Gastrocnemius medialis (tissue), 4 donors: ENCODE measurements at regions of chr9 and their contacts with region 1.

Region 1: DNA sequence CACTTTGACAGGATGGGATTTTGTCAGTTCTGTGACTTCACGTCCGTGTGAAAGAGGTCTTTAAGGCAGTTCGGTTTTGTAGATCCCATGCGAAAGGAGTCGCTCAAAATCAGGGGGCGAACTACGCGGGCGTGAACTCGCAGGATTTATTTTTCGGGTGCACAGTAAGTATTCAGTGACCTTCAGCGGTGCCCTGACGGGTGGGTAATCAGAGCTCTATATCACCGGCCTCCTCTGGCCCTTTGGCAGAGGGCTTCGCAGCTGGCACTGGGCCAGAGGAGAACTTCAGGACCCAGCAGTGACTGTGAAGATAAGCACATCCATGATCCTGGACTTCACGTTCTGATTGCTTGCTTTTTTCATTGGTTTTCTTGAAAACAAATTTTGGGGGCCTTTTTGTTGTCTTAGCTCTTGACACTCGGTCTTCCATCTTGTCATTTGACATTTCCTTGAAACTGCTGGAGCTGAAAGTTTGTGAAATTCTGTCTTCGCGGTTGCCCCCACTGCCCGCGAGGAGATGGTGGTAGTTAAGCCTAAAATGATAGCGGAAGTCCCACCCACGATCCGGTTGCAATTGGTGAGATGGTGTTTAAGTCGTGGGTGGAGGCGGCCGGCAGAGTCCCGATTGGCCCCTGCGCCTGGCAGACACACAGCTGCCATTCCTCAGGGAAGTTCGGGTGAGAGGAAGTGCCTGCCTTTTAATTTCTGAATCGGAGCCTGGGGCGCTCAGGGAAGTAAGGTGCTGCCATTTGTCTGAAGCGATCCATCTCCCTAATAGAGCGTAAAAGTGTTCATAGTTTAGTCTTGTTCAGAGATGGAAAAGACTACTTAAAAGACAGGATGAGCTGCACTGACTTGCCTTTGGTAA is at the start of gene FAM120AOS:
- DNase-seq: peak; percentile 92 to 95
- ATAC-seq: peak; percentile 75 to 81
- H3K4me3 ChIP-seq: peak within 1 kb of the TSS; percentile 84 to 97 (median 94)
- H3K27ac ChIP-seq: peak within 1 kb of the TSS; percentile 93 to 99 (median 96)
- H3K4me1 ChIP-seq: peaks cover 44 to 58% of the 10 kb centered on the region in 2 donors
- H3K27me3 ChIP-seq: no peaks in the 10 kb centered on the region
- CTCF ChIP-seq: no peak
- POLR2A ChIP-seq: peak; percentile 79 to 84
- total RNA-seq, gene FAM120AOS: 22.8 to 49.5 (median 32.4) TPM

Region 2: DNA sequence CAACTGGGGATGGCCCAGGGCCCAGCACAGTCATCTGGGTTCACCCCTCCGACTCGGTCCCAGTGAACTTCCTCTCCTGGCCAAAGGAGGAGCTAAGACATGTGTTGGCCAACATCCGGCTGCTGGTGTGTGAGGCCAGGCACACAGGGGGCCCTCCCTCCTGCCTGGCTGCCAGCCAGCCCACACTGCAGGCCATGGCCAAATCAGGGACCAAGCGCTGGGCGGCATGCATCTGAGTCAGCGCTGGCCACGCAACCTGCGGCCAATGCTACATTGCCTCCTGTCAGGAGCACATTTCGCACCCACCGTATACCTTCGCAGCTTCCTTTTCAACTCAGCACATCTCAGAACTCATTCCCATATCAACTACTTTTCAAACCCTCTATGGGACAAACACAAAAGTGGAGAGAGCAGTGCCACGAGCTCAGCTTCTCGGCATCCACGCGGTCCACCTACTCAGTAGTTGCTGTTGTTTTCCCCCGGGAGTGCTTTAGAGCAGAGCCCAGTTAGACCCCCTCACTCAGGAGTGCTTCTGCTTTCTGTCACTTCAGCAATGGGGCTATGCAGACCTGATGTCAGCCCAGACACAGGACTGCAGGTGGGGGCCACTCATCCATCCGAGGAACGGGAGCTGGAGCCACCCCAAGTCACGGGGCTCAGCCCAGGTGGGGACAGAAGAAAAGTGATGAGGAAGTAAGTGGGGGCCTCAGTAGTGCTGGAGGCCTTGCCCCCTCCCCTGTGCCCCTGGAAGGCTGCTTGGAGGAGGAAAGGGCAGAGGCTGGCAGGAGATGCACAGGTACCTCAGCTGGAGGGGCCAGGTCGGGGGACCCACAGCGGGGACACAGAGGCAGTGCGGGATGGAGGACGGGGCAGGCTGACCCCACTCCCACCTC is 333.1 kb before region 1 on chr9:
- in situ Hi-C with region 1: loop called in 1 of 4 experiments (anchors 25 kb)
- intact Hi-C with region 1: no loop called
- DNase-seq: peak; percentile 85 to 93
- ATAC-seq: peak; percentile 68 to 79
- H3K4me3 ChIP-seq: no peak overlapping the region
- H3K27ac ChIP-seq: peak overlapping the region; percentile 65 to 72 (median 68)
- H3K4me1 ChIP-seq: peaks cover 11 to 18% of the 10 kb centered on the region in 2 donors
- H3K27me3 ChIP-seq: no peaks in the 10 kb centered on the region
- CTCF ChIP-seq: peak in 4 of 5 experiments; percentile 38 to 58 (median 45)
- POLR2A ChIP-seq: peak; percentile 21 to 29

Region 3: DNA sequence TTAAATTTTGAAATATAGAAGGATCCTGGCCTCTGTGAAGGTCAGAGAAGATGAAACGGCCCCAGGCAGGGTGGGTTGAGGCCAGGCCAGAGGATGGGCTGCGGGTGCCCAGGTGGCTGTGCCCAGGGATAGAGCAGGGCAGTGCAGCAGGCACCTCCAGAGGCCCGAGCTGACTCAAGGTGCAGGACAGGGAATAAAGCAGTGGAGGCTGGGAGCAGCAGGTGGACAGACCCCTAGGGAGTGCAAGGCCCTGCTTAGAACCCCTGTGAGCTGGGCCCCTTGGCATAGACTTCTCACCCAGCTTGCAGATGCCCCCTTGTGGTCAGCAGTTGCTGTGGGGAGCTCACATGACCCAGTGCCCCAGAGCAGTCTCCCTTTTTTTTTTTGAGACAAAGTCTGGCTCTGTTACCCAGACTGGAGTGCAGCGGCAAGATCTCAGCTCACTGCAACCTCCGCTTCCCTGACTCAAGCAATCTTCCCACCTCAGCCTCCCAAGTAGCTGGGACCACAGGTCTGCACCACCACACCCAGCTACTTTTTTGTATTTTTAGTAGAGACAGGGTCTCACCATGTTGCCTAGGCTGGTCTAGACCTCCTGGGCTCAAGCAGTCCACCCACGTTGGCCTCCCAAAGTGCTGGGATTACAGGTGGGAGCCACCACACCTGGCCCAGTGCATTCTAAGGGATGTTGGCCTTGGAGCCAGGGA is 150.6 kb before region 1 on chr9:
- in situ Hi-C with region 1: no loop called
- intact Hi-C with region 1: loop called (anchors 2 kb)
- DNase-seq: peak in 1 of 2 donors; percentile 58
- ATAC-seq: no peak
- H3K4me3 ChIP-seq: no peak overlapping the region
- H3K27ac ChIP-seq: peak overlapping the region in 1 of 4 donors; percentile 26
- H3K4me1 ChIP-seq: peaks cover 66 to 71% of the 10 kb centered on the region in 2 donors
- H3K27me3 ChIP-seq: no peaks in the 10 kb centered on the region
- CTCF ChIP-seq: peak in 4 of 5 experiments; percentile 33 to 59 (median 49)
- POLR2A ChIP-seq: no peak

Region 4: GRCh38 chr9:93509084-93509483 is 55.8 kb after region 1 on chr9:
- in situ Hi-C with region 1: no loop called
- intact Hi-C with region 1: loop called (anchors 2 kb)
- DNase-seq: no peak
- ATAC-seq: no peak
- H3K4me3 ChIP-seq: no peak overlapping the region
- H3K27ac ChIP-seq: peak overlapping the region in 2 of 4 donors; percentile 69 to 80
- H3K4me1 ChIP-seq: peaks cover 47 to 73% of the 10 kb centered on the region in 2 donors
- H3K27me3 ChIP-seq: no peaks in the 10 kb centered on the region
- CTCF ChIP-seq: no peak
- POLR2A ChIP-seq: no peak

Region 5: GRCh38 chr9:93536874-93537273 is 83.6 kb after region 1 on chr9:
- in situ Hi-C with region 1: no loop called
- intact Hi-C with region 1: loop called (anchors 2 kb)
- DNase-seq: peak in 1 of 2 donors; percentile 37
- ATAC-seq: peak in 1 of 2 donors; percentile 74
- H3K4me3 ChIP-seq: no peak overlapping the region
- H3K27ac ChIP-seq: peak overlapping the region in 3 of 4 donors; percentile 4 to 58 (median 12)
- H3K4me1 ChIP-seq: peaks cover 33% of the 10 kb centered on the region in 2 donors
- H3K27me3 ChIP-seq: no peaks in the 10 kb centered on the region
- CTCF ChIP-seq: peak in 1 of 5 experiments; percentile 21
- POLR2A ChIP-seq: no peak

Region 6: GRCh38 chr9:93566408-93567270 is 113.4 kb after region 1 on chr9:
- in situ Hi-C with region 1: loop called (anchors 5 to 25 kb)
- intact Hi-C with region 1: loop called (anchors 1 kb)
- DNase-seq: peak; percentile 95 to 97
- ATAC-seq: peak; percentile 93 to 94
- H3K4me3 ChIP-seq: peak overlapping the region; percentile 64 to 88 (median 72)
- H3K27ac ChIP-seq: peak overlapping the region; percentile 89 to 99 (median 94)
- H3K4me1 ChIP-seq: peaks cover 10 to 13% of the 10 kb centered on the region in 2 donors
- H3K27me3 ChIP-seq: no peaks in the 10 kb centered on the region
- CTCF ChIP-seq: peak; percentile 92 to 98 (median 95)
- POLR2A ChIP-seq: peak; percentile 83 to 89

Region 7: DNA sequence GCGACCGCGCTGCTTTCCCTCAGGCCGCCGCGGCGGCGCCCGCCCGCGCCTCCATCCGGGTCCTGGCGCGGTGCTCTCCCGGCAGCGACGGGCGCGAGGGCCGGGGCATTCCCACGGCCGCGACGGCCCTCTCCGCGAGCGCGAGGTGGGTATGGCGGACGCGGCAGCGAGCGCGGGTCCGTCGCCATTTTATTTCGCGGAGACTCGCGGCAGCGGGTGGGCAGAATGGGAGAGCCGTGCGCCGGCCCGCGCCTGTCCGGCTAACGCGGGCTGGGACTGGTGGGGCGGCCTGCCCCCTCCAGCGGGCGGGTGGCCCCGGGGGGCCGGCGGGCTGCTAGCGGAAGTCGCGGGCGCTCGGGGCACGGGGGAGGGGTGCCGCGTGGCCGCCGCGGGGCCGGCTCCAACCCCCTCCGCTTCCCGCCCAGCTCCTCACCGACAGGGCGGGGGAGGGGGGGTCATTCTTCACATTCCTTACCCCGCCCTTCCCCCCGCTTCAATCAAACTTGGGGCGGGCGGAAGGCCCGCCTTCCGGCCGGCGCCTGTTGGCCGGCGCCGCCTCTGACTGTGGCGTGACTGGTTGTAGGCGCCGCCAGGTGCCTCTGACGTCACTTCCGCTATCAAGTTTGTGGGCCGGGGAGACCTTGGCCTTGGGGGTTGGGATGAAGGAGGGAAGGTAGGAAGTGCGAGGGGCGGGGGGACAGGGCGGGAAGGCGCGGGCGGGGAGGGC is 713.1 kb after region 1 on chr9:
- in situ Hi-C with region 1: no loop called
- intact Hi-C with region 1: loop called (anchors 5 kb)
- DNase-seq: peak; percentile 98 to 99
- ATAC-seq: peak; percentile 79 to 85
- H3K4me3 ChIP-seq: peak overlapping the region; percentile 63 to 93 (median 73)
- H3K27ac ChIP-seq: peak overlapping the region; percentile 95 to 100 (median 99)
- H3K4me1 ChIP-seq: peaks cover 38 to 44% of the 10 kb centered on the region in 2 donors
- H3K27me3 ChIP-seq: no peaks in the 10 kb centered on the region
- CTCF ChIP-seq: peak in 4 of 5 experiments; percentile 32 to 47 (median 42)
- POLR2A ChIP-seq: peak; percentile 99 to 100